ENCODE measurements at regions of chr14 and their contacts with region 1.

Region 1: DNA sequence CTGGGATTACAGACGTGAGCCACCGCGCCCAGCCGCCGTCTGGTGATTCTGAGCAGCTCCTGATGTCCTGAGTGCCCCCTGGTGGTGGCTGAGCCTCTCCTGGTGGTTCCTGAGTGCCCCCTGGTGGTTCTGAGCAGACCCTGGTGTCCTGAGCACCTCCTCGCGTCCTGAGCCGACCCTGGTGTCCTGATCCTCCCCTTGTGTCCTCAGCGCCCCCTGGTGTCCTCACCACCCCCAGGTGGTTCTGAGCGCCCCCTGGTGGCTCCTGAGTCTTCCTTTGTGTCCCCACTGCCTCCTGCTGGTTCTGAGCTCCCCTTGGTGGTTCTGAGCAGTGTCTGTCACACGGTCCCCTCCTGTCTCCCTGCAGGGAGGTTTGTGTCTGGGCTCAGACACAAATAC is 1304.9 kb downstream of the TMEM121 start:
- DNase-seq: peak; percentile 60
- H3K4me3 Mint-ChIP-seq: no peak overlapping the region
- H3K27ac Mint-ChIP-seq: no peak overlapping the region
- H3K4me1 Mint-ChIP-seq: peaks cover 2% of the 10 kb centered on the region
- H3K27me3 Mint-ChIP-seq: peaks cover 33% of the 10 kb centered on the region

Region 2: GRCh38 chr14:106812788-106813476 is 18.4 kb before region 1 on chr14:
- CTCF ChIA-PET with region 1: interaction called, 16 read pairs
- POLR2A ChIA-PET with region 1: no interaction called
- DNase-seq: no peak
- H3K4me3 Mint-ChIP-seq: no peak overlapping the region
- H3K27ac Mint-ChIP-seq: no peak overlapping the region
- H3K4me1 Mint-ChIP-seq: peaks cover 24% of the 10 kb centered on the region
- H3K27me3 Mint-ChIP-seq: peaks cover 31% of the 10 kb centered on the region

Region 3: GRCh38 chr14:106821119-106821518 is 10.2 kb before region 1 on chr14:
- CTCF ChIA-PET with region 1: interaction called, 39 read pairs
- POLR2A ChIA-PET with region 1: interaction called, 3 read pairs
- DNase-seq: no peak
- H3K4me3 Mint-ChIP-seq: no peak overlapping the region
- H3K27ac Mint-ChIP-seq: no peak overlapping the region
- H3K4me1 Mint-ChIP-seq: no peaks in the 10 kb centered on the region
- H3K27me3 Mint-ChIP-seq: peaks cover 36% of the 10 kb centered on the region

Region 4: DNA sequence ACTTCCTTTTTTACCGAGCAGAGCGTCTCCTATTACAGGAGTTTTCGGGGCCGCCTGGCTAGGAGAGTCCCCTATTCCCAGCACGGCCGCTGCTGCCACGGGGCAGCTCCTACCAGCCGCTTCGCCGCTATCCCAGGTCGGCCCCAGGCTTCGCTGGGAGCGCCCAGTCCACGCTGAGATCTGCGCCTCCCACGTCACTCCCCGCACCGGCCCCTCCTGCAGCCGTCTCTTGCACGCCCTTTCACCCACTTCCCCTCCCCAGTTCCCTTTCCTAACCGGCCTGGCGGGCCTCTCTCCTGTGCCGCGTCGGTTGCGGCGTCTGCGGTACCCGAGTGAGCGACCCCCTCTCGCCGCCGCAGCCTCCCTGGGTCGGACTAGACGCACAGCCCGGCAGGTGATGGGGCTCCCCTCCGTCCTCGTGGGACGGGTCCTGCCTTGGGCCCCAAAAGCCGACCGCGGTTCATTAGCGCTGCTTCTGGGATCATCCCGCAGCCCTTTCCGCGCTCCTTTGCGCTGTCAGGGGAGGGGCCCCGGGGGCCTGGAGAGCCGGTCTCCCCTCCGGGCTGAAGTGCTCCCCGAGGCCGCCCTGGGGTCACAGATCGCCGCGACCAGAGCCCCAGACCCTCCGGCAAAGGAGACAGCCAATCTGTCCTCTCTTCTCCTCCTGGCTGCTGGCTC is 13.4 kb after region 1 on chr14:
- CTCF ChIA-PET with region 1: interaction called, 53 read pairs
- POLR2A ChIA-PET with region 1: no interaction called
- DNase-seq: peak; percentile 68
- H3K4me3 Mint-ChIP-seq: peak overlapping the region; percentile 81
- H3K27ac Mint-ChIP-seq: peak overlapping the region; percentile 84
- H3K4me1 Mint-ChIP-seq: peaks cover 36% of the 10 kb centered on the region
- H3K27me3 Mint-ChIP-seq: peaks cover 7% of the 10 kb centered on the region

Region 5: DNA sequence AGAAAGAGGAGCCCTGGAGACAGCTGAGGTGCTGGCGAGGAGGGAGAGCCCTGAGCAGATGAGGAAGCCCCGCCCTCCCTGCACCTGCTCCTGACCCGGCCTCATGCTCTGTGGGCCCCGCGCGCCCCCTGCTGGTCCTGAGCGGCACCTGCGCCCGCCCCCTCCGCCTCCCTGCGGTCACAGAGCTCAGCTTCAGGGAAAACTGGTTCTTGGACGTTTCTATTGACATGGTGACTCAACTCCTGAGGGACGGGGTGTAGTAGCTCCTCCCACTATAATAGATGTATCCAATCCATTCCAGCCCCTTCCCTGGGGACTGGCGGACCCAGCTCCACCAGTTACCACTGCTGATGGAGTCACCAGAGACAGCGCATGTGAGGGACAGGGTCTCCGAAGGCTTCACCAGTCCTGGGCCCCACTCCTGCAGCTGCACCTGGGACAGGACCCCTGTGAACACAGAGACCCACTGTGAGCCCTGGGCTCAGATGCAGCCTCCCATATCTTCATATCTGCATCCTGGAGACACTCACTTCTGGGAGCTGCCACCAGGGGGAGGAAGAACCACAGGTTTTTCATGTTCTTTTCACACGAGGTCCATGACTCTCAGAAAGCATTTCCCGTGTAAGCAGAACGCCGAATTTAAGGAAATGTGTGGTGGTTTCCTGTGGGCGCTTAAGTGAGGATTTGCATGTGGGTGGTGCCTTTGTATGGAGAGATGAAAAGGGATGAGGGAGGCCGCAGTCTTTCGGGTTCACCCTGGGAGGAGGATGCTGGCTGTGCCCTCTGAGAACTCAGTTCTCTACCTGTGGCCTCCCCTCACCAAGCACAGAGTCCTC is 41.5 kb after region 1 on chr14:
- CTCF ChIA-PET with region 1: interaction called, 22 read pairs
- POLR2A ChIA-PET with region 1: no interaction called
- DNase-seq: peak; percentile 79
- H3K4me3 Mint-ChIP-seq: peak overlapping the region; percentile 10
- H3K27ac Mint-ChIP-seq: no peak overlapping the region
- H3K4me1 Mint-ChIP-seq: peaks cover 30% of the 10 kb centered on the region
- H3K27me3 Mint-ChIP-seq: peaks cover 45% of the 10 kb centered on the region

Measured in activated CD4-positive, alpha-beta T cell treated with anti-CD3 and anti-CD28 coated beads, Interleukin-2, amount 10 ng/mL, durations not matched to agents 7 days and 5 days (primary cell).